Activated CD4-positive, alpha-beta T cell treated with anti-CD3 and anti-CD28 coated beads for 36 hours (primary cell): ENCODE measurements at regions of chr12 and their contacts with region 1.

Region 1: DNA sequence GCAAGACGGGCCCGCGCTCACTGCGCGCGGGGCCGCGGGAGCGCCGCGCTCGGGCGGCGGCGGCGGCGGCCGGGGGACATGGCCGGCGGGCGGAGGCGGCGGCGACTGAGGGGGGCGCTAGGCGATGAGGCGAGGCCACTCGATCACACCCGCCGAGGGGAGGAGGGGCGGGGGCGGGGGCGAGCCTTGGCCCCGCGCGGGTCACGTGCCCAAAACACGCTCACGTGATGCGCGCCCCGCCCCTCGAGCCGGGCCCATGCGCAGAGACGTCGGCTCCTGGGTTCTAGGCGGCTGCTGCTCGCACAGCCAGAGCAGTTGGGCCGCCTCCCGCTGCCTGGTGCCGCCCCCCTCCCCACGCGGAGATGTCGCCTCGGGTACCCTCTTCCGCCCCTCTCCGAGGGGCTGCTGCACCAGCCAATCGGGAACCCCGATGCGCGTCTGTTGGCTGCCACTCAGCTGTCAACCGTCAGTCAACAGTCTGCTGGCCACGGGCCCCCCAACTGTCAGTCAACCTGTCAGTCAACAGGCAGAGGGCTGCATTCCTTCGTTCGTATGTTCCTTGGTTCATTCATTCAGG is at the start of gene SPPL3:
- DNase-seq: peak; percentile 96
- ATAC-seq: peak; percentile 81
- H3K4me3 Mint-ChIP-seq: peak within 1 kb of the TSS; percentile 92
- H3K27ac Mint-ChIP-seq: peak within 1 kb of the TSS; percentile 95
- H3K4me1 Mint-ChIP-seq: peaks cover 28% of the 10 kb centered on the region
- H3K27me3 Mint-ChIP-seq: no peaks in the 10 kb centered on the region
- total RNA-seq, gene SPPL3: 29.5 to 48.2 TPM

Region 2: DNA sequence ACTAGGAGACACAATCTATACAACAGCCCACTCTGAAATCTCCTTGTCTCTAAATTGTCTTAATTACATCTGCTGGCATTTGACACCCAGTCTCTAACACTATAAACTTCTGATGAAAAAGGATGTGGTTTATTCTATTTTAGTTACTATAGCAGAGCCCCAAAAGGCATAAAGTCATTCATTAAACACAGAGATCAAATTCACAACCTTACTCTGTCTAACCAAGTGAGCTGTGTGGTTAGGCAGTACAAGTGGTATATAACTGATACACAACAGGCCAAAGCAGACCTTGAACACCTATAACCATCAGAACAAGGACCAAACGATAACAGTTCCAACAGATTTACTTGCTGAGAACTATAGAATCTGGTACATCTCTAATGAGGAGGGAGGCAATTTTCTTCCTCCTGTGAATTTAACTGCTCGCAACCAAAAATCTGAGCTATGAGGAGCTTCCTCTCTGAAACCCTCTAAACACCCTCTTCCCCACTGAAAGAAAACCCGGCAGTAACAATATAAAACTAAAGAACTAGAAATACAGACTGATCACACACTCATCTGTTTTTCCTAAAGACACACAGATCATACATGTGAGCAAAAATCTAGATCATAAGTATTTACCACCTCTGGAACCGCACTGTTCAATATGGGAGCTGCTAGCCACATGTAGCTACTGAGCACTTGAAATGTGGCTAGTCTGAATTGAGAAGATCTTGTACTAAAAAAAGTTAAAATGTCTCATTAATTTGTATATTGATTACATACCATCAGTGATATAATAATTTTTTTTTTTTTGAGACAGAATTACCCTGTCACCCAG is 17.9 kb before region 1 on chr12:
- CTCF ChIA-PET with region 1: interaction called, 16 read pairs
- POLR2A ChIA-PET with region 1: interaction called, 6 read pairs
- intact Hi-C with region 1: no loop called
- DNase-seq: no peak
- ATAC-seq: peak; percentile 85
- H3K4me3 Mint-ChIP-seq: peak overlapping the region; percentile 21
- H3K27ac Mint-ChIP-seq: peak overlapping the region; percentile 76
- H3K4me1 Mint-ChIP-seq: peaks cover 55% of the 10 kb centered on the region
- H3K27me3 Mint-ChIP-seq: no peaks in the 10 kb centered on the region

Region 3: GRCh38 chr12:121560392-121561008 is 656.2 kb after region 1 on chr12:
- CTCF ChIA-PET with region 1: no interaction called
- POLR2A ChIA-PET with region 1: no interaction called
- intact Hi-C with region 1: no loop called
- DNase-seq: no peak
- ATAC-seq: no peak
- H3K4me3 Mint-ChIP-seq: no peak overlapping the region
- H3K27ac Mint-ChIP-seq: peak overlapping the region; percentile 31
- H3K4me1 Mint-ChIP-seq: peaks cover 8% of the 10 kb centered on the region
- H3K27me3 Mint-ChIP-seq: no peaks in the 10 kb centered on the region